PC-9 (cell line): ENCODE measurements at regions of chr4 and their contacts with region 1.

Region 1: DNA sequence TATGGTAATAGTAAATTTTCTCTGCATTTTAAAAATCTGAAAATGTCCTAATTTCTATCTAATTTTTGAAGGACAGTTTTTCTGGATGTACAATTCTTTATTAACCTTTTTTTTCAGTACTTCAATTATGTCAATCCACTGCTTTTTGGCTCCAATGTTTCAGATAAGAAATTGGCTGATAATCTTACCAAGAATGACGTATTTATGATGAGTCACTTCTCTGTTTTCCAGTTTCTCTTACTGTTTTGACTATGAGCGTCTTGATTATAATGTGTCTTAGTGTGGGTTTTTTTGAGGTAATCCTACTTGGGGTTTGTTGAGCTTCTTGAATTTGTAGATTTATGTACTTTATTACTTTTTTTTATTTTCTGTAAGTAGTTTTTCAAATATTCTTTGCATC is 47.2 kb downstream of the UGT2B11 start:
- DNase-seq: no peak
- H3K4me3 ChIP-seq: no peak overlapping the region
- H3K27ac ChIP-seq: no peak overlapping the region
- H3K4me1 ChIP-seq: no peaks in the 10 kb centered on the region
- H3K27me3 ChIP-seq: no peaks in the 10 kb centered on the region
- CTCF ChIP-seq: no peak

Region 2: DNA sequence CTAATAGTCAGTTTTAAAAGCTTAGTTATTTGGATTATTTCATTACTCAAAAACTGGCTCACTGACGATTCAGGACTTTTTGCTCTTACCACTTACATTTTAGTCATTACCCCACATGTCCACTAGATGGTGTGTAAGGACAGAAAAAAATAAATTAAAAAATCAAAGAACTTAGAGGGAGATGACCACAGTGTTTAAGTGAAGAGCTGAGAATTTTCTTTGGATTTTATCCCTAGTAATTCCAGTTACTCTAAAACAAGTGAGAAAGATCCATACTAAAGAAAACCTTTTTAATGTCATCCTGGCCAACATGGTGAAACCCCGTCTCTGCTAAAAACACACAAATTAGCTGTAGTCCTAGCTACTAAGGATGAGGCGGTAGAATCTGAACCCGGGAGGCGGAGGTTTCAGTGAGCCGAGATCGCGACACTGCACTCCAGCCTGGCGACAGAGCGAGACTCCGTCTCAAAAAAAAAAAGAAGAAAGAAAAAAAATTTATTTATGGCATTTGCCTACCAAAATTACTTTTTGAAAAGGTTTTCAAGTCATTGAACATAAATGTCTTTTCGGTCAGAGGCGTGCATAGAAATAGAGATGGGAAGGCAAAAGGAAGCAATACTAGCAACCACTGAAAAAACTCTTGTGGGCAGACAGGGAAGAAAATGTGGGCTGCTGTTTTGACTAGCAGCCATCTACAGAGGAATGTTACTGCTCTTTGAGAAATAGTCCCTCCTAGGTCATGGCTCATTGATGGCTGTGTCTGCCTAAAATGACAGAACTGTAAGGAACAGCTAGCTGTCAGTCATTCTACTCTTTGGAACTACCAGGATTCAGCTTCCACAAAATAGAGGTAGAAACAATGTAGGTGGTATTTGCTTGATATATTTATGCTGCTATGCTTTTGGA is 895.2 kb before region 1 on chr4:
- CTCF ChIA-PET with region 1: no interaction called
- POLR2A ChIA-PET with region 1: no interaction called
- intact Hi-C with region 1: loop called (anchors 5 kb)
- DNase-seq: peak in 1 of 2 experiments; percentile 48
- H3K4me3 ChIP-seq: no peak overlapping the region
- H3K27ac ChIP-seq: no peak overlapping the region
- H3K4me1 ChIP-seq: no peaks in the 10 kb centered on the region
- H3K27me3 ChIP-seq: no peaks in the 10 kb centered on the region
- CTCF ChIP-seq: peak; percentile 76

Region 3: DNA sequence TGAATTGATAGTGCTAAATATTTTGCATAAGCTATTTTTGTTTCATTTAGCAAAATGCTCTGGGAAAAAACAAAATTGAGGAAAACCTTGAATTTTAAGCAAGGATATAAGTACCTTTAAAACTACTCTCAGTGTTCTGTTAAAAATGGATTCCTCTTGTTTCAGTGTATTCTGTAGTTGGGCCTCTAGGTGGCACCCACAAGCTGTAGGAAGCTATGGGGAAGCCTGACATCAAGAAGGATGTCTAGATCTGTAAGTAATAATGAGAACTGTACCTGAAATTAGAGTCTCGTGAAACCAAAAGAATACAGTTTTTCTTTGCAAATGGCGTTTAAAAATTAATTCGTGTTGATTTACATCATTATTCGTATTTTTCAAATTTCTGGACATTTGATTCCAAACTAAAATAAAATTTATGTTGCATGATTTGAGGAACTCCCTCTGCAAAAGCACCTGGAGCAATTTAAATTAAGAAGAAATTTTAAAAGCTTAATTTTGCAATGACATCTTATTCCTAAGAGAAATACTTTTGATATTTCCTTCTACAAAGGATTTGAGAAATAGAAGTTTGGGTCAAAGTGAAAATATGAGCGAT is 668.8 kb before region 1 on chr4:
- CTCF ChIA-PET with region 1: no interaction called
- POLR2A ChIA-PET with region 1: no interaction called
- intact Hi-C with region 1: loop called (anchors 1 kb)
- DNase-seq: peak in 1 of 2 experiments; percentile 35
- H3K4me3 ChIP-seq: no peak overlapping the region
- H3K27ac ChIP-seq: no peak overlapping the region
- H3K4me1 ChIP-seq: no peaks in the 10 kb centered on the region
- H3K27me3 ChIP-seq: no peaks in the 10 kb centered on the region
- CTCF ChIP-seq: peak; percentile 82

Region 4: DNA sequence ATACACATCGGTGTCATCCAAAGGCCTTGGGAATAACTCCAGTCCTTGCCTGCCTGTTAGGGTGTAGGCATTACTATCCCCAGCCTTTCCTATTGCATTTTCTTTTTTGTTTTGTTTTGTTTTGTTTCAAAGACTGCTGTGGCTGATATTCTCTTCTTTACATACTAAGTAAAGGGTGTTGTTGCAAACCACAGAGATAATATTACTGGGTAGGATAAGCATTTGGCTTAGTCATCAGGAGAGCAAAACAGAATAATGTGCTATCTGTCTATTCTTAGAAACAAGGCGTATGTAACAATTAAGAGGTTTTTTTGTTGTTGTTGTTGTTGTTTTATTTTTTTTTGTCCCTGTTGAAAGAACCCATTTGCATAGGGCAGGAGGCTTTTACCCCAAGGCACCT is 154.8 kb after region 1 on chr4:
- CTCF ChIA-PET with region 1: no interaction called
- POLR2A ChIA-PET with region 1: no interaction called
- intact Hi-C with region 1: no loop called
- DNase-seq: no peak
- H3K4me3 ChIP-seq: no peak overlapping the region
- H3K27ac ChIP-seq: no peak overlapping the region
- H3K4me1 ChIP-seq: no peaks in the 10 kb centered on the region
- H3K27me3 ChIP-seq: no peaks in the 10 kb centered on the region
- CTCF ChIP-seq: no peak

Region 5: DNA sequence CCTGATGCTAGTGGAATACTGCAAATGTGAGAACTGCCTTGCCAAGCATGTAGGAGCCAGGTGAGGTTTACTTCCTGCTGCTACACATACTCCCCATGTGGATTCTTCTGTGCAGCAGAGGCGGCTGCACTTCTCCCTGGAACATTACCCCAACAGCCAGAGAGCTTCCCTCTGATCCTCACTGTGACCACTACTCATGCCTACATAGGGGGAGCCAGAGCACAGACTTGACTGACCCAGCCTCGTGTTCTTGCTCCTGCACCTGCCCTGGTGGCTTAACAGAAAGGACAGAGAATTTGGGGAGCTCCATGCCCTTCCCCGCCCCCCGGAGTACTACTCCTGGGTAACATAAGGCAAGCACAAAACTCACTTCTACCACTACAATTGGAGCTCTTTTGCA is 433.8 kb after region 1 on chr4:
- CTCF ChIA-PET with region 1: no interaction called
- POLR2A ChIA-PET with region 1: no interaction called
- intact Hi-C with region 1: no loop called
- DNase-seq: no peak
- H3K4me3 ChIP-seq: no peak overlapping the region
- H3K27ac ChIP-seq: no peak overlapping the region
- H3K4me1 ChIP-seq: no peaks in the 10 kb centered on the region
- H3K27me3 ChIP-seq: no peaks in the 10 kb centered on the region
- CTCF ChIP-seq: no peak